ENCODE measurements at regions of chr2 and their contacts with region 1.

Region 1: DNA sequence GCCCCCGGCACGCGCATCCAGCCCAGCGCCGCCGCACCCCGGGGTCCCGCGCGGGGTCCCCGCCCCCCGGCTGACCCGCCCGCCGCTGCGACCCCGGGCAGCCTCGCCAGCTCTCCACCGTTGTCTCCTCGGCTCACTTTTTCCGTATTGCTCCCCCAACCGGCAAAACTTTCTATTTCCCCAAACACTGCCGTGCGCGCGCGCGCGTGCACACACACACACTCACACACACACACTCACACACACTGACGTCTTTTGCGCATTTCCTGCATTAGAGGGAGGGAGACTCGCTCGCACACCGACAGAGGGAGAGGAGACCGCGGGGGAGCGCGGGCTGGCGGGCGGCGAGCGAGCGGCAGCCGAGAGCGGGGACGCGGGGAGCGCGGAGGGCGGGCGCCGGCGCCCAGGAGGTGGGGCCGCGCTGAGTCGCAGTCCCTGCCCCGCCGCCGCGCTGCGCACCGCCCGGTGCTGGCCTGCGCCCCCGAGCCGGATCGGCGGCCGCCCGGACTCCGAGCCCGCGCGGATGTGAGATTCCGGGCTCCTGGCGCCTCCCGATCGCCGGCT is 542 bp upstream of the PRKCE start:
- DNase-seq: peak; percentile 99
- ATAC-seq: peak; percentile 88
- H3K4me3 ChIP-seq: peak overlapping the region; percentile 16 to 96 (median 87)
- H3K4me3 Mint-ChIP-seq: peak overlapping the region; percentile 93
- H3K27ac ChIP-seq: peak overlapping the region; percentile 84 to 85
- H3K27ac Mint-ChIP-seq: peak overlapping the region; percentile 97
- H3K4me1 ChIP-seq: peaks cover 25 to 43% of the 10 kb centered on the region in 2 donors
- H3K4me1 Mint-ChIP-seq: peaks cover 46% of the 10 kb centered on the region
- H3K27me3 ChIP-seq: no peaks in the 10 kb centered on the region
- H3K27me3 Mint-ChIP-seq: no peaks in the 10 kb centered on the region
- CTCF ChIP-seq: peak; percentile 57

Region 2: DNA sequence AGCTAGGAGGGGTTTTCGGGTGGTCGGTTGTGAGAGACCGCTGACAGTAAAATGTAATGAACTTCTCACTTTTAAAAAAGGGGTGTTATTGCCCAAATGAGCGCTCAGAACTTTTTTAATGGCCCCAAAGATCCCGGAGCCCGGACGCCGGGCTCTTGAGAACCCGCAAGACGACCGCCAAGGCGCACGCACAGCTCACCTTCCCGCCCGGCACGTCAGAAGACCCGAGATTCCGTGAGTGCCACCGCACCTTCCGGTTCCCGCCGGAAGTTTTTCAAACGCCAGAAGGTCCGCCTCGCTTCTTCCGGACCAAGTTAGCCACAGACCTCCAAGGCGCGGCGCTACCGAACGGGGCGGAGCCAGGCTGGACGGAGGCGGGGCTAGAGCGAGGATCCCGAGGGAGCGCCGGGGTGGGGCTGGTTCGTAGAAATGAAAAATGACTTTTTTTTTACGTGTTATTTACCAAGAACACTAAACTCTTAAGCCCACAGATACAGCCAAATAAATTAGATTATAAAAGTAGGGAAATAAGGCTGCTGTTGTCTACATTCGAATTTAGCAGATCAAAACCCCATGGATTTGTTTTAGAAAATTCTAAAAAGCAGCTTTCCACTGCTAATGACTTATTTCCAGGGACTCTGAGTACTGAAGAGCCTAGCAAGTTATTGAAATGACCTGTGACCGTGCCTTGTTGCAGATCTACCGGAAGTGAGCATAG is 39.8 kb before region 1 on chr2 and contains the start of gene SRBD1:
- CTCF ChIA-PET with region 1: no interaction called
- POLR2A ChIA-PET with region 1: no interaction called
- intact Hi-C with region 1: loop called (anchors 1 kb)
- DNase-seq: peak; percentile 95
- ATAC-seq: peak; percentile 97
- H3K4me3 ChIP-seq: peak within 1 kb of the TSS; percentile 73 to 96 (median 88)
- H3K4me3 Mint-ChIP-seq: peak within 1 kb of the TSS; percentile 95
- H3K27ac ChIP-seq: peak within 1 kb of the TSS; percentile 90 to 93
- H3K27ac Mint-ChIP-seq: peak within 1 kb of the TSS; percentile 93
- H3K4me1 ChIP-seq: peaks cover 13 to 16% of the 10 kb centered on the region in 2 donors
- H3K4me1 Mint-ChIP-seq: peaks cover 26% of the 10 kb centered on the region
- H3K27me3 ChIP-seq: no peaks in the 10 kb centered on the region
- H3K27me3 Mint-ChIP-seq: no peaks in the 10 kb centered on the region
- CTCF ChIP-seq: no peak
- total RNA-seq, gene SRBD1: 27.1 and 27.6 TPM in 2 replicates

Region 3: DNA sequence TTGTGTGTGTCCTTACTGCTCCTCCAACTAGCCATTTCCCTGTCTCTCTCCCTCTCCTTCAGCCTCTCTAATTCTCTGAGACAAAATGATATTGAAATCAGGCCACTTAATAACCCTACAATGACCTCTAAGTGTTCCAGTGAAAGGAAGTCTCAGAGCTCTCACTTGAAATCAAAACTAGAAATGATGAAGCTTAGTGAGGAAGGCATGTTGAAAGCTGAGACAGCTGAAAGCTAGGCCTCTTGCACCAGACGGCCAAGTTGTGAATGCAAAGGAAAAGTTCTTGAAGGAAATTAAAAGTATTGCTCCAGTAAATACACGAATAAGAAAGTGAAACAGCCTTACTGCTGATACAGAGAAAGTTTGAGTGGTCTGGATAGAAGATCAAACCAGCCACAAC is 73.4 kb after region 1 on chr2:
- CTCF ChIA-PET with region 1: interaction called, 61 read pairs
- POLR2A ChIA-PET with region 1: interaction called, 89 read pairs
- intact Hi-C with region 1: loop called (anchors 1 kb)
- DNase-seq: peak; percentile 45
- ATAC-seq: no peak
- H3K4me3 ChIP-seq: no peak overlapping the region
- H3K4me3 Mint-ChIP-seq: peak overlapping the region; percentile 53
- H3K27ac ChIP-seq: peak overlapping the region; percentile 63 to 91
- H3K27ac Mint-ChIP-seq: peak overlapping the region; percentile 89
- H3K4me1 ChIP-seq: peaks cover 80 to 88% of the 10 kb centered on the region in 2 donors
- H3K4me1 Mint-ChIP-seq: peaks cover 89% of the 10 kb centered on the region
- H3K27me3 ChIP-seq: no peaks in the 10 kb centered on the region
- H3K27me3 Mint-ChIP-seq: no peaks in the 10 kb centered on the region
- CTCF ChIP-seq: no peak

Region 4: GRCh38 chr2:45778720-45779171 is 127.8 kb after region 1 on chr2:
- CTCF ChIA-PET with region 1: interaction called, 86 read pairs
- POLR2A ChIA-PET with region 1: interaction called, 9 read pairs
- intact Hi-C with region 1: loop called (anchors 1 kb)
- DNase-seq: peak; percentile 83
- ATAC-seq: peak; percentile 83
- H3K4me3 ChIP-seq: peak overlapping the region in 2 of 5 experiments; percentile 4 to 16
- H3K4me3 Mint-ChIP-seq: peak overlapping the region; percentile 27
- H3K27ac ChIP-seq: no peak overlapping the region
- H3K27ac Mint-ChIP-seq: no peak overlapping the region
- H3K4me1 ChIP-seq: peaks cover 56 to 65% of the 10 kb centered on the region in 2 donors
- H3K4me1 Mint-ChIP-seq: peaks cover 69% of the 10 kb centered on the region
- H3K27me3 ChIP-seq: no peaks in the 10 kb centered on the region
- H3K27me3 Mint-ChIP-seq: no peaks in the 10 kb centered on the region
- CTCF ChIP-seq: peak; percentile 83

Region 5: DNA sequence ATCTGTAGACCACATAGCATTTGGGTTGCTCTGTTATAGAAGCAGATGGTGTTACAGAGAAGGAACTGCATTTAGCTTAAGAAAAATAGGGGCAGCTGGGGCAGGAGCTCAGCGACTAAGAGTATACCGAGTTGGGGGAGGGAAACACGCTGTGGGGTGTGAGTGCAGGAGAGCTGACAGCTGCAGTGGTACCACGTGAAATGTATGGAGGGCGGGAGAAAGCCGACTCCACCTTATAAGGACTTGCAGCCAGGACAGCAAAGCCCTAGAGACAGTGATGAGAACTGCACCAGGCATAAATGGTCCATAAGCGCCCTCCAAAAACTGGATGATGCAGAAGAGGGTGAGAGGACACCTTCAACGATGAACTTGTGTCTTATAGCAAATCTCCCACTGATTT is 238.1 kb after region 1 on chr2:
- CTCF ChIA-PET with region 1: interaction called, 3 read pairs
- POLR2A ChIA-PET with region 1: interaction called, 3 read pairs
- intact Hi-C with region 1: loop called (anchors 5 kb)
- DNase-seq: peak; percentile 78
- ATAC-seq: peak; percentile 81
- H3K4me3 ChIP-seq: no peak overlapping the region
- H3K4me3 Mint-ChIP-seq: peak overlapping the region; percentile 73
- H3K27ac ChIP-seq: peak overlapping the region; percentile 0 to 50
- H3K27ac Mint-ChIP-seq: peak overlapping the region; percentile 43
- H3K4me1 ChIP-seq: peaks cover 87 to 91% of the 10 kb centered on the region in 2 donors
- H3K4me1 Mint-ChIP-seq: peaks cover 91% of the 10 kb centered on the region
- H3K27me3 ChIP-seq: no peaks in the 10 kb centered on the region
- H3K27me3 Mint-ChIP-seq: no peaks in the 10 kb centered on the region
- CTCF ChIP-seq: peak; percentile 49